ENCODE measurements at regions of chr15 and their contacts with region 1.

Region 1: DNA sequence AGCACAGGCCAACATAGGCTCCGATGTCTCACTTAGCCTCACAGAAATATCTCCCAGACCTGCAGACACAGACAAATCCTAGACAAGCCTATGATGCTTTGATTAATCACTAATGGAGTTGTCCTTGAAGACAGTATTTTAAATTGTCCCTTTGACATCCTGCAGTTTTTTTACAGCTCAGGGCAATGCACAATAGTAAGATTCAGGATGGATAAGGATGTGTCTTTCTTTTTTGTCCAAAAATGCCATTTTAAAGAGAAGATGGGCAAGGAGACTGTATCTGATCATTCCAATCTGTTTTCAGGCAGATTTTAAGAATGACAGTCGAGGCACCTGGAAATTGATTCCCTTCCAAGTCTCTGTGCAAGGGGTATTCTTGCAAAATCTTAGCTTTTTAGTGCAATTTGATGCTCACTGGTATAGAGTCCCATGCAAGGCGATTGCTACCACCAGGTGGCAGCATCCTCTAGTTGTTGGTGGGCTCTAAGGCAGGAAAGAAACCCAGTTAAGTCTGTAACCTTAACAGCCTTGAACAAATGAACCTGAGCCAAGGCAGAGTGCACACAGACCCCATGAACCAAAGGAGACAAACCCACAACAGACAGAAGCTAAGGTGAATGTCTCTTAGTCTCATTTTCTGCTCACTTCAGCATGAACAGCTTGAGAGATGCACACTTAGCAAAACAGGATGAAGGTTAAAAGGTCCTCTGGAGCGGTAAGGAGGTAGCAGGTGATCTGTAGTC is 51.2 kb upstream of the MINAR1 start:
- DNase-seq: peak; percentile 58
- H3K27ac ChIP-seq: no peak overlapping the region
- CTCF ChIP-seq: peak; percentile 94

Region 2: GRCh38 chr15:79265167-79265566 is 115.8 kb before region 1 on chr15:
- CTCF ChIA-PET with region 1: no interaction called
- POLR2A ChIA-PET with region 1: no interaction called
- DNase-seq: peak; percentile 42
- H3K27ac ChIP-seq: no peak overlapping the region
- CTCF ChIP-seq: no peak

Region 3: GRCh38 chr15:79349525-79349924 is 31.4 kb before region 1 on chr15:
- CTCF ChIA-PET with region 1: interaction called, 13 read pairs
- POLR2A ChIA-PET with region 1: no interaction called
- DNase-seq: no peak
- H3K27ac ChIP-seq: no peak overlapping the region
- CTCF ChIP-seq: no peak

Region 4: GRCh38 chr15:79365765-79366164 is 15.2 kb before region 1 on chr15:
- CTCF ChIA-PET with region 1: interaction called, 16 read pairs
- POLR2A ChIA-PET with region 1: no interaction called
- DNase-seq: no peak
- H3K27ac ChIP-seq: no peak overlapping the region
- CTCF ChIP-seq: no peak

Region 5: DNA sequence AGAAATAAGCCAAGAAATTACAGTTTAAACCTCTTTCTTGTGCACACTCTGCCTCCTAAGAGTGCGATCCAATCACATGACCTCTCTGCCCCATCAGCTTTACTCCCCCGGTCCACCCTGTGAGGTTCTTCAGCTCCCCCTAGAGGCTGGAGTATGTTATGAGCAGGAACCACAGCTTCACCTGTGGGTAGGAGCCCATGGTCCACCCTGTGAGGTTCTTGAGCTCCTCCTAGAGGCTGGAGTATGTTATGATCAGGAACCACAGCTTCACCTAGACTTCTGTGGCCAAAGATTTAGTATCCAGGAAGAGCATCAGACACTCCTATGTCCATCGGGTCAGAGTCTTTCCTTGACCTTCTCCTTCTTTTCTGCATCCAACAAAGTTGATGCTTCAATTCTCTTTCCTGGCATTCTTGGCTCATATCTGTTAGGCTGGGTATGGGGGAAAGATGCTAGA is 215.2 kb after region 1 on chr15:
- CTCF ChIA-PET with region 1: interaction called, 29 read pairs
- POLR2A ChIA-PET with region 1: no interaction called
- DNase-seq: peak; percentile 91
- H3K27ac ChIP-seq: no peak overlapping the region
- CTCF ChIP-seq: peak; percentile 81

Region 6: DNA sequence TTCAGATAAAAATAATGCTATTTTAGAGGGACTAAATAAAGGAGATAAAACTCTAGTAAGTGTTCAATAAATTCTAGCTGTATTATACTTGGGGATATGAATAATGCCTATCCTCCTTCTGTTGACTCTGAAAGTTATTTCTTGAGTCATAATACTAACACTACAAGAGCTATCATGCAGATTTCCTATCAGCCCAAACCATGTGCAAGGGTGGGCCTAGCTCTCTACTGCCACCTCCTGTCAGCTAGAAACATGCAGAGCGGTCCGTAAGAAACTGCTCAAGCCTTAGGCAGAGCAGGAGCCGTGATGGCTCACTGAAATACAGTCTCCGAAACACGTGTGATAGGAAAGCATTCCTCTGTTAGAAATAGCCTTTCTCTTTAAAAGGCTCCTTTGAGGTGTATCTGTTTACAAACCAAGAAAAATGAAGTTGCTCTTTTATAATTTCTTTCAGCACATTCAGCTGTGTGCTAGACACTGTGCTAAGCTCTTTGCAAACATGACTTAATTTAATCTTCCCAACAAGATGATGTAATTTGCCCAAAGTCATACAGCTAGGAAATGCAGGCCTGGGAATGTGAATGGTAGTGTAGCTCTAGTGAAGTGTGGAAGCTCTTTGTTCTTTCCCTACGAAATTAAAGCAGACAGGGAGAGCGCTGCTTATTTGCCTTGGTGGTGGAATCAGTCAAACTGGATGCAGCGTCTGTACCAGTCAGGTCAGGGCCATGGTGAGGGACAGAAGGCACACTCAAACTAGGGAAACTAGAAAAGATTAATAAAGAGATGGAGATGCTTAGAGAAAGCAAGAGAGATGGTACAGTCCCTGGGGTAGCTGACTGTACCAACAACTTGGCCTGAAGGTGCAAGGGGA is 472.8 kb after region 1 on chr15:
- CTCF ChIA-PET with region 1: interaction called, 12 read pairs
- POLR2A ChIA-PET with region 1: no interaction called
- DNase-seq: peak; percentile 72
- H3K27ac ChIP-seq: no peak overlapping the region
- CTCF ChIP-seq: peak; percentile 98

Measured in RWPE1 (cell line).